Heart left ventricle (tissue), 16 donors: ENCODE measurements at regions of chr14 and their contacts with region 1.

Region 1: GRCh38 chr14:64986578-64987571 is at the start of gene FNTB:
- DNase-seq: peak; percentile 95 to 98 (median 98)
- ATAC-seq: peak; percentile 98 to 99 (median 99)
- H3K4me3 ChIP-seq: peak within 1 kb of the TSS; percentile 66 to 93 (median 80)
- H3K27ac ChIP-seq: peak within 1 kb of the TSS; percentile 60 to 94 (median 87)
- H3K4me1 ChIP-seq: peaks cover 0 to 41% (median 14%) of the 10 kb centered on the region in 12 donors
- H3K27me3 ChIP-seq: no peaks in the 10 kb centered on the region
- CTCF ChIP-seq: peak; percentile 56 to 97 (median 80)
- POLR2A ChIP-seq: peak in 1 of 2 donors; percentile 53
- total RNA-seq, gene FNTB: 13.0 to 20.8 (median 16.7) TPM

Region 2: GRCh38 chr14:64800000-64800399 is 186.9 kb before region 1 on chr14:
- intact Hi-C with region 1: loop called in 1 of 10 experiments (anchors 10 kb)
- DNase-seq: peak in 4 of 5 donors; percentile 41 to 67 (median 50)
- ATAC-seq: peak; percentile 44 to 72 (median 63)
- H3K4me3 ChIP-seq: no peak overlapping the region
- H3K27ac ChIP-seq: no peak overlapping the region
- H3K4me1 ChIP-seq: peaks cover 0 to 7% (median 0%) of the 10 kb centered on the region in 12 donors
- H3K27me3 ChIP-seq: no peaks in the 10 kb centered on the region
- CTCF ChIP-seq: peak; percentile 29 to 63 (median 50)
- POLR2A ChIP-seq: no peak

Region 3: DNA sequence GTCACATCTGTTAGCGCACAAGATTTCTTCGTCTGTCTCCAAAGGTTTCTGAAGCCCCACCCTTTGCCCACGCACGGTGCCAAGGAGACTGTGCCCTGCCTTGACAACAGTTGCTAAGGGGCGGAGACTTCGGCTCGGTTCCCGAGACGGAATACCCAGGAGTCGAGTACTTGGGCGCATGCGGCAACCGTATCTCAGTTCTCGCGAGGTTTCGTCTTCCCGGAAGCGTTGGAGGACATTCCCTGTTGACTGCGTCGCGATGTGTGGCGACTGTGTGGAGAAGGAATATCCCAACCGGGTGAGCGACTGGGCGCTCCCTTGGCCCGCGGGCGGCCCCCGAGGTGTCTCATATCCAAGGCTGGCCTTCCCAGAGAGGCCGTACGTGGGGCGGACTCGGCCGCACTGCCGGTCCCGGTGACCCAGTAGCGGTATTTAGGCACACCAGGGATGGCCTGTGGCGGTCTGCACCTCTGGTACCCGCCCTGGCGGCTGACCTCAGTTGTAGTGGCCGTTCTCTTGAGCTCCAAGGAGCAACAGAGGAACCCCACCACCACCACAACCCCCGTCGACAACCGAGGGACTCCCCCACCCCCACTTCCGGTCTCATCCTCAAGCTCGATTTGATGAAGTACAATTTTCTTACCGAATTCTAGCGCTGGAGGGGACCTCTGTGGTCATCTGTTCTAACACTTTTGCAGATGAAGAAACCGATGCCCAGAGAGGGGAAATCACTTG is 72.5 kb before region 1 on chr14 and contains the start of gene CHURC1:
- intact Hi-C with region 1: loop called in 5 of 10 experiments (anchors 2 to 10 kb)
- DNase-seq: peak; percentile 97 to 99 (median 98)
- ATAC-seq: peak; percentile 98 to 99 (median 98)
- H3K4me3 ChIP-seq: peak within 1 kb of the TSS; percentile 57 to 100 (median 83)
- H3K27ac ChIP-seq: peak within 1 kb of the TSS; percentile 69 to 99 (median 92)
- H3K4me1 ChIP-seq: peaks cover 0 to 40% (median 27%) of the 10 kb centered on the region in 12 donors
- H3K27me3 ChIP-seq: no peaks in the 10 kb centered on the region
- CTCF ChIP-seq: no peak
- POLR2A ChIP-seq: peak in 1 of 2 donors; percentile 91
- total RNA-seq, gene CHURC1: 57.2 to 106 (median 77.3) TPM

Region 4: GRCh38 chr14:65102441-65103149 is 115.7 kb after region 1 on chr14 and contains the start of gene MAX:
- intact Hi-C with region 1: loop called in 2 of 10 experiments (anchors 2 kb)
- DNase-seq: peak; percentile 98 to 99 (median 99)
- ATAC-seq: peak; percentile 96 to 97 (median 97)
- H3K4me3 ChIP-seq: peak within 1 kb of the TSS; percentile 67 to 99 (median 90)
- H3K27ac ChIP-seq: peak within 1 kb of the TSS; percentile 77 to 97 (median 88)
- H3K4me1 ChIP-seq: peaks cover 7 to 47% (median 36%) of the 10 kb centered on the region in 12 donors
- H3K27me3 ChIP-seq: no peaks in the 10 kb centered on the region
- CTCF ChIP-seq: no peak
- POLR2A ChIP-seq: peak in 1 of 2 donors; percentile 66
- total RNA-seq, gene MAX: 42.3 to 102 (median 79.5) TPM

Region 5: GRCh38 chr14:65824285-65824977 is 837.6 kb after region 1 on chr14:
- intact Hi-C with region 1: loop called in 1 of 10 experiments (anchors 10 kb)
- DNase-seq: peak in 2 of 5 donors; percentile 30 to 41
- ATAC-seq: peak in 3 of 4 donors; percentile 76 to 82 (median 80)
- H3K4me3 ChIP-seq: no peak overlapping the region
- H3K27ac ChIP-seq: no peak overlapping the region
- H3K4me1 ChIP-seq: no peaks in the 10 kb centered on the region
- H3K27me3 ChIP-seq: peaks cover 0 to 12% (median 6%) of the 10 kb centered on the region in 9 donors
- CTCF ChIP-seq: peak; percentile 86 to 96 (median 90)
- POLR2A ChIP-seq: no peak